Activated CD8-positive, alpha-beta T cell treated with anti-CD3 and anti-CD28 coated beads, Interleukin-2, amount 10 ng/mL, durations not matched to agents 7 days and 5 days (primary cell): ENCODE measurements at regions of chr10 and their contacts with region 1.

Region 1: DNA sequence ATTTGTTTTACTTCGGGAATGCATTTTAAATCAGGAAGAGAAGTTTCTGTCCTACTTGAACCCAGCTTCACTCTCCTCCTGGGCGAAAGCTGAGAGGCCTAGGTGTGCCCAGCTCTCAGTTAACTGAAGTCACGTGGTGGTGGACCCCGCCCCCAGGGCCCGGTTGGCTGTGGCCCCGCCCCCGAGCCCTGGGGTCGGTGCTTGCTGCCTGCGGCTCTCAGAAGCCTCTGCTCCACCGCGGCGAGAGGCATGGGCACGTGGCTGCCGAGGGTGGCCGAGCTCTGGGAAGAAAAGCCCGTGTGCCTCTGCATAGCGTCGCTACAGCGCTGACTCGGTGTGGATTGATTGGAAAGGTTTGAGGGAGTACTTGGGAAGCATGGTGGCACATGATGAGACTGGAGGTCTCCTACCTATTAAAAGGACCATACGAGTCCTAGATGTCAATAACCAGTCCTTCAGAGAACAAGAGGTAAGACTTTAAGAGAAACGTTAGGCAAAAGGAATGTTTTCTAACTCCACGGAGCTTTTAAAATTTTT is 34.1 kb downstream of the NET1 start:
- DNase-seq: peak; percentile 80
- ATAC-seq: peak; percentile 72
- H3K4me3 Mint-ChIP-seq: peak overlapping the region; percentile 68
- H3K27ac Mint-ChIP-seq: peak overlapping the region; percentile 62
- H3K4me1 Mint-ChIP-seq: peaks cover 55% of the 10 kb centered on the region
- H3K27me3 Mint-ChIP-seq: no peaks in the 10 kb centered on the region

Region 2: DNA sequence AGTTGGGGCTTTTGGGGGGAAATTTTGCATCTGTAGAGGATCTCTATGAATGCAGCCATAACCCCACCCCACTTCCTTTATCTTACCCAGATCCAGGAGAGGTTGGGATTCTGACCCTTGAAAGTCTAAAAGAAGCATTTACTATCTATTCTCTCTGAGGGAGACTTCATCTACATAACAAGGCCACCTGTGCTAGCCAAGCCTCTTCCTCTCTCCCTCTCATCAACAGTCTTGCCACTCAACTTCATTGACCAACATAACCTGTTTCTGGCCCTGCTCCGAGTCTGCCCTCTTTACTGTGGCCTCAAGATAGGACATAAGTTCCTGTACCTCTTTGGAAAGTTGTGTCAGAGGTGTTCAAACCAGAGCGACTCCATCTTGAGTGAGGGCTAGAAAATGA is 61.2 kb before region 1 on chr10:
- CTCF ChIA-PET with region 1: no interaction called
- POLR2A ChIA-PET with region 1: no interaction called
- DNase-seq: no peak
- ATAC-seq: no peak
- H3K4me3 Mint-ChIP-seq: no peak overlapping the region
- H3K27ac Mint-ChIP-seq: no peak overlapping the region
- H3K4me1 Mint-ChIP-seq: no peaks in the 10 kb centered on the region
- H3K27me3 Mint-ChIP-seq: peaks cover 3% of the 10 kb centered on the region

Region 3: GRCh38 chr10:5461914-5462840 is 15.7 kb after region 1 on chr10:
- CTCF ChIA-PET with region 1: interaction called, 24 read pairs
- POLR2A ChIA-PET with region 1: no interaction called
- DNase-seq: no peak
- ATAC-seq: no peak
- H3K4me3 Mint-ChIP-seq: no peak overlapping the region
- H3K27ac Mint-ChIP-seq: no peak overlapping the region
- H3K4me1 Mint-ChIP-seq: peaks cover 8% of the 10 kb centered on the region
- H3K27me3 Mint-ChIP-seq: no peaks in the 10 kb centered on the region

Region 4: DNA sequence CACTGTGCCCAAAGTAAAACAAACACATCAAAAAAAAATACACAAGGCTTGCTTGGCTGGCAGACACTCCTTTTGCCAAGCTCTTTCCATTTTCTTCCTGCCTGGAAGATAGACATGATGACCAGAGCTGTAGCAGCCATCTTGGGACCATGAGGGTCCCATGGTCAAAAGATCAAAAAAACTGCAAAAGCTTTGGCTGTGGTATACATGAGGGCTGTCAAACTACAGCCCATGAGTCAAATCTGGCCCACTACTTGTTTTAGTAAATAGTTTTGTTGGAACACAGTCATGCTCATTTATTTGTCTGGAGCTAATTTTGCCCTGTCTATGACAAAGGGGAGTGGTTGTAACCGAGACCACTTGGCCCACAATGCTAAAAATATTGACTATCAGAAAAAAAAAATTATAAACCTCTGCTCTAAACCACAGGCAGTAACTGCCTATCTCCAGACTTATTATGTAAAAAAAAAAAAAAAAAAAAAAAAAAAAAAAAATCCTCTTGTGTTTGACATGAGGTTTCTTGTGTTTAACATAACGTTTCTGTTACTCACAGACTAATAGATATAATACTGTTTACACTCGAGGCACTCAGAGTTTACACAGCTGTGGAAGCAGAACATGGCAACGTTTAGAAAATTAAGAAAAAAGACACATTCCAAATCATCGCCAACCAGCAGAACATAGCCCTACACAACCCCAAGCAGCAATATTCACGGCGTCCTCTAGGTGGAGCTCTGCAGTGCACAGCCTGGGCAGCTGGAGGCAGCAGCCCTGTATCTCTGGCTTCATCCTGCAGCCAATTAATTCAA is 183.0 kb after region 1 on chr10:
- CTCF ChIA-PET with region 1: interaction called, 198 read pairs
- POLR2A ChIA-PET with region 1: no interaction called
- DNase-seq: peak; percentile 90
- ATAC-seq: peak; percentile 86
- H3K4me3 Mint-ChIP-seq: no peak overlapping the region
- H3K27ac Mint-ChIP-seq: no peak overlapping the region
- H3K4me1 Mint-ChIP-seq: peaks cover 19% of the 10 kb centered on the region
- H3K27me3 Mint-ChIP-seq: peaks cover 6% of the 10 kb centered on the region